Caco-2 (cell line): ENCODE measurements at regions of chr4 and their contacts with region 1.

Region 1: GRCh38 chr4:165493359-165493758 is 114.6 kb downstream of the CPE start:
- DNase-seq: peak; percentile 72 to 81
- H3K4me3 ChIP-seq: no peak overlapping the region
- H3K4me3 Mint-ChIP-seq: peak overlapping the region; percentile 48
- H3K27ac Mint-ChIP-seq: no peak overlapping the region
- H3K4me1 ChIP-seq: no peaks in the 10 kb centered on the region
- H3K4me1 Mint-ChIP-seq: peaks cover 7% of the 10 kb centered on the region
- H3K27me3 ChIP-seq: no peaks in the 10 kb centered on the region
- H3K27me3 Mint-ChIP-seq: no peaks in the 10 kb centered on the region
- CTCF ChIP-seq: peak; percentile 70

Region 2: DNA sequence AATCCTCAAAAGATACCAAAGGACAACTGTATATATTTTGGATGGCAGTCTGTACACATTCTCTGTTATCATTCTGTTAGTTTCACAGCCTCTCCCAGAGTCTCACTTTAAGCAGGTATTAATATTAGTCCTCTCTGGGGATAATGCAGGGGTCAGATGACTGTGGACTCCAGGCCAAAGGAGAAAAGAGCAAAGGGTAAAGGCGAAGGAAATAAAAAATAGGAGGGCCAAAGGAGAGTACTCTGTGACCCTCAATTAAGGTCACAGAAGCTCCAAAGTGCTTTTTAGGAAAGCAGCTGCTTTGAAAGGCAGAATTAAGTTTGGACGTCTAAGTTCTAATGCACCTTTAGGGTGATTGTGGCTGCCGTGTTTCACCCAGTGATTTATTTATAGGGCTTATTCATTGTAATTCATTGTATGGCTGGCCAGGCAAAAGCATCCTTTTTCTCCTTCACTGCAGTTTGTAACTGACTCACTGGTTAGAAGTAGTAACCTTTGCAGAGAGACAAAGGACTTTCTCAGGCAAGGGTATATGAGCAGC is 158.1 kb before region 1 on chr4:
- CTCF ChIA-PET with region 1: no interaction called
- POLR2A ChIA-PET with region 1: no interaction called
- intact Hi-C with region 1: no loop called
- DNase-seq: no peak
- H3K4me3 ChIP-seq: no peak overlapping the region
- H3K4me3 Mint-ChIP-seq: no peak overlapping the region
- H3K27ac Mint-ChIP-seq: no peak overlapping the region
- H3K4me1 ChIP-seq: peaks cover 6% of the 10 kb centered on the region
- H3K4me1 Mint-ChIP-seq: peaks cover 24% of the 10 kb centered on the region
- H3K27me3 ChIP-seq: no peaks in the 10 kb centered on the region
- H3K27me3 Mint-ChIP-seq: no peaks in the 10 kb centered on the region
- CTCF ChIP-seq: no peak

Region 3: DNA sequence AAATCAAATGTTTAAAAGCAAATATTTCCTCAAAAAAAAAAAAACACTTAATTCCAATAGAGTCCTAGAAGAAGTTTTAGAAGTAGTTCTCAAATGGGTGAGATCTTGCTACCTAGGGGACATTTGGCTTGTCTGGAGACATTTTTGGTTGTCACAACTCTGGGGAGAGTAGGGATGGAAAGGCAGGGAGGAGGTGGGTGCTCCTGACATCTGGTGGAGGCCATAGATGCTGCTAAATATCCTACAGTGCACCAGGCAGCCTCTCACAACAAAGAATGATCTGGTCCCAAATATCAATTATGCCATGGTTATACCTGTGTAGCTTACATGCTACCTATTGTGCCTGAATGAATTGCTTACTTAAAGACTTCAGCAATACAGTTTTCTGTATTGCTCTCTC is 67.7 kb before region 1 on chr4:
- CTCF ChIA-PET with region 1: no interaction called
- POLR2A ChIA-PET with region 1: no interaction called
- intact Hi-C with region 1: no loop called
- DNase-seq: no peak
- H3K4me3 ChIP-seq: no peak overlapping the region
- H3K4me3 Mint-ChIP-seq: no peak overlapping the region
- H3K27ac Mint-ChIP-seq: no peak overlapping the region
- H3K4me1 ChIP-seq: no peaks in the 10 kb centered on the region
- H3K4me1 Mint-ChIP-seq: no peaks in the 10 kb centered on the region
- H3K27me3 ChIP-seq: no peaks in the 10 kb centered on the region
- H3K27me3 Mint-ChIP-seq: no peaks in the 10 kb centered on the region
- CTCF ChIP-seq: no peak

Region 4: DNA sequence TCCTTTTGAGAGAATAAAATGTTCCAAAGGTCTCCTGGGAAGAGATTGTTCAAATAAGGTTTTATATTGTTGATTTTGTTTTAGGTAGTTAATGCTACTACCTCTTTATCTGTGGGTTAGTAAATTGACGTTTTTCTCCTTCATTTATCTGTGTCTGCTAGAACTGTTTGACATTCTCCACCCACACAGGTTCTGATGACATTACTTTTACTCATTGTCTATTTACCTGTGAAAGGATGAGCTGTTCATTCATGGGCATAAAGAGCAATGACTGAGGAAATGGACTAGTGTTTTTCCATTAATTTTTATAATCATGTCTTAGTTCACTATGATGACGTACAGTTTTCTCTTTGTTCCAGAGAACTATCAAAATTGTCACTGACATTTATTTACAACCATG is 38.9 kb before region 1 on chr4:
- CTCF ChIA-PET with region 1: no interaction called
- POLR2A ChIA-PET with region 1: no interaction called
- intact Hi-C with region 1: no loop called
- DNase-seq: no peak
- H3K4me3 ChIP-seq: no peak overlapping the region
- H3K4me3 Mint-ChIP-seq: no peak overlapping the region
- H3K27ac Mint-ChIP-seq: no peak overlapping the region
- H3K4me1 ChIP-seq: no peaks in the 10 kb centered on the region
- H3K4me1 Mint-ChIP-seq: no peaks in the 10 kb centered on the region
- H3K27me3 ChIP-seq: no peaks in the 10 kb centered on the region
- H3K27me3 Mint-ChIP-seq: no peaks in the 10 kb centered on the region
- CTCF ChIP-seq: no peak

Region 5: GRCh38 chr4:165560941-165561340 is 67.6 kb after region 1 on chr4:
- CTCF ChIA-PET with region 1: no interaction called
- POLR2A ChIA-PET with region 1: no interaction called
- intact Hi-C with region 1: no loop called
- DNase-seq: no peak
- H3K4me3 ChIP-seq: no peak overlapping the region
- H3K4me3 Mint-ChIP-seq: no peak overlapping the region
- H3K27ac Mint-ChIP-seq: no peak overlapping the region
- H3K4me1 ChIP-seq: no peaks in the 10 kb centered on the region
- H3K4me1 Mint-ChIP-seq: no peaks in the 10 kb centered on the region
- H3K27me3 ChIP-seq: no peaks in the 10 kb centered on the region
- H3K27me3 Mint-ChIP-seq: peaks cover 3% of the 10 kb centered on the region
- CTCF ChIP-seq: no peak

Region 6: GRCh38 chr4:165700855-165701254 is 207.5 kb after region 1 on chr4:
- CTCF ChIA-PET with region 1: interaction called, 8 read pairs
- POLR2A ChIA-PET with region 1: no interaction called
- intact Hi-C with region 1: loop called (anchors 1 kb)
- DNase-seq: peak in 1 of 2 experiments; percentile 28
- H3K4me3 ChIP-seq: no peak overlapping the region
- H3K4me3 Mint-ChIP-seq: no peak overlapping the region
- H3K27ac Mint-ChIP-seq: no peak overlapping the region
- H3K4me1 ChIP-seq: no peaks in the 10 kb centered on the region
- H3K4me1 Mint-ChIP-seq: no peaks in the 10 kb centered on the region
- H3K27me3 ChIP-seq: no peaks in the 10 kb centered on the region
- H3K27me3 Mint-ChIP-seq: no peaks in the 10 kb centered on the region
- CTCF ChIP-seq: peak; percentile 45 to 51

Region 7: GRCh38 chr4:165779950-165780670 is 286.8 kb after region 1 on chr4:
- CTCF ChIA-PET with region 1: no interaction called
- POLR2A ChIA-PET with region 1: no interaction called
- intact Hi-C with region 1: loop called (anchors 2 kb)
- DNase-seq: no peak
- H3K4me3 ChIP-seq: no peak overlapping the region
- H3K4me3 Mint-ChIP-seq: no peak overlapping the region
- H3K27ac Mint-ChIP-seq: no peak overlapping the region
- H3K4me1 ChIP-seq: no peaks in the 10 kb centered on the region
- H3K4me1 Mint-ChIP-seq: no peaks in the 10 kb centered on the region
- H3K27me3 ChIP-seq: no peaks in the 10 kb centered on the region
- H3K27me3 Mint-ChIP-seq: no peaks in the 10 kb centered on the region
- CTCF ChIP-seq: no peak

Region 8: DNA sequence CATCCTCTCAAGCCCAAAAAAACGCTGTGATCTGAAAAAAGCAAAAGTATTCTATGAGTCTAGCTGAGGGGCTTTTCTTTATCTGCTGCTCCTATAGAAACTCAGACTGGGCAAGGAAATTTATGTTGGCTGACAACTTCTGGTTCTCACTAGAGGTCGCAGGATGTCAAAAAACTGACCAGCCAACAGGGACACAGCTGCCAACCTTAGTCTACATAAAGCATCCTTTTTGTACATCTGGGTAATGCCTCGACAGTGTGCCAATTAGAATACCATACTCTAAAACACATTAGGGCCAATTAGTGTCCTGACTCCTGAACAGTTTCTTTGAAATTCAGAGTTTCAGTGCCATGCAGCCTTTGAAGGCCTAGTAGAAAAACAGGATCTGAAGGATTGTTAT is 370.9 kb after region 1 on chr4:
- CTCF ChIA-PET with region 1: interaction called, 3 read pairs
- POLR2A ChIA-PET with region 1: no interaction called
- intact Hi-C with region 1: loop called (anchors 1 kb)
- DNase-seq: peak in 1 of 2 experiments; percentile 25
- H3K4me3 ChIP-seq: no peak overlapping the region
- H3K4me3 Mint-ChIP-seq: no peak overlapping the region
- H3K27ac Mint-ChIP-seq: no peak overlapping the region
- H3K4me1 ChIP-seq: no peaks in the 10 kb centered on the region
- H3K4me1 Mint-ChIP-seq: peaks cover 7% of the 10 kb centered on the region
- H3K27me3 ChIP-seq: no peaks in the 10 kb centered on the region
- H3K27me3 Mint-ChIP-seq: no peaks in the 10 kb centered on the region
- CTCF ChIP-seq: peak in 1 of 2 experiments; percentile 35

Region 9: GRCh38 chr4:166091912-166092510 is 598.7 kb after region 1 on chr4:
- CTCF ChIA-PET with region 1: interaction called, 12 read pairs
- POLR2A ChIA-PET with region 1: no interaction called
- intact Hi-C with region 1: loop called (anchors 1 kb)
- DNase-seq: no peak
- H3K4me3 ChIP-seq: no peak overlapping the region
- H3K4me3 Mint-ChIP-seq: no peak overlapping the region
- H3K27ac Mint-ChIP-seq: no peak overlapping the region
- H3K4me1 ChIP-seq: no peaks in the 10 kb centered on the region
- H3K4me1 Mint-ChIP-seq: peaks cover 8% of the 10 kb centered on the region
- H3K27me3 ChIP-seq: no peaks in the 10 kb centered on the region
- H3K27me3 Mint-ChIP-seq: no peaks in the 10 kb centered on the region
- CTCF ChIP-seq: peak; percentile 46 to 61

Region 10: GRCh38 chr4:166252487-166253402 is 759.4 kb after region 1 on chr4:
- CTCF ChIA-PET with region 1: no interaction called
- POLR2A ChIA-PET with region 1: no interaction called
- intact Hi-C with region 1: loop called (anchors 2 kb)
- DNase-seq: peak; percentile 30 to 32
- H3K4me3 ChIP-seq: no peak overlapping the region
- H3K4me3 Mint-ChIP-seq: no peak overlapping the region
- H3K27ac Mint-ChIP-seq: no peak overlapping the region
- H3K4me1 ChIP-seq: no peaks in the 10 kb centered on the region
- H3K4me1 Mint-ChIP-seq: no peaks in the 10 kb centered on the region
- H3K27me3 ChIP-seq: no peaks in the 10 kb centered on the region
- H3K27me3 Mint-ChIP-seq: no peaks in the 10 kb centered on the region
- CTCF ChIP-seq: peak; percentile 54 to 69